K562 (cell line): ENCODE measurements at regions of chr2 and their contacts with region 1.

Region 1: GRCh38 chr2:24409700-24410556 is 49.6 kb upstream of the ITSN2 start:
- DNase-seq: peak; percentile 57 to 78 (median 63)
- ATAC-seq: peak; percentile 95
- H3K4me3 ChIP-seq: no peak overlapping the region
- H3K27ac ChIP-seq: no peak overlapping the region
- H3K4me1 ChIP-seq: peaks cover 0 to 3% of the 10 kb centered on the region in 2 experiments; a peak in 1 of 5 replicates
- H3K27me3 ChIP-seq: no peaks in the 10 kb centered on the region
- CTCF ChIP-seq: peak; percentile 79 to 91 (median 80)
- EP300 ChIP-seq: no peak
- POLR2A ChIP-seq: no peak
- RAD21 ChIP-seq: peak; percentile 93 to 95

Region 2: DNA sequence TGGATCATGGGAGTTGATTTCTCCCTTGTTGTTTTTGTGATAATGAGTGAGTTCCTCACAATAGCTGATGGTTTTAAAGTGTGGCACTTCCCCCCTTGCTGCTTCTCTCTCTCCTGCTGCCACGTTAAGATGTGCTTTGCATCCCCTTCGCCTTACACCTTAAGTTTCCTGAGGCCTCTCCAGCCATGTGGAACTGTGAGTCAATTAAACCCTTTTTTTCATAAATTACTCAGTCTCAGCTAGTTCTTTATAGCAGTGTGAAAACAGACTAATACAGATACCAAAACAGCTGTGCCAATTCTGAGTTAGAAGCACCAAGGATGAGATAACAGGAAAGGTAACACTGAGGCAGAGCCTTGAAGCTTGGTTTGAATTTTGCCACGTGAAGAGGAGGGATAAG is 94.3 kb before region 1 on chr2:
- CTCF ChIA-PET with region 1: no interaction called
- POLR2A ChIA-PET with region 1: no interaction called
- in situ Hi-C with region 1: no loop called
- intact Hi-C with region 1: no loop called
- DNase-seq: no peak
- ATAC-seq: no peak
- H3K4me3 ChIP-seq: no peak overlapping the region
- H3K27ac ChIP-seq: no peak overlapping the region
- H3K4me1 ChIP-seq: no peaks in the 10 kb centered on the region
- H3K27me3 ChIP-seq: no peaks in the 10 kb centered on the region
- CTCF ChIP-seq: no peak
- EP300 ChIP-seq: no peak
- POLR2A ChIP-seq: no peak
- RAD21 ChIP-seq: no peak

Region 3: GRCh38 chr2:24421668-24422067 is 11.7 kb after region 1 on chr2:
- CTCF ChIA-PET with region 1: no interaction called
- POLR2A ChIA-PET with region 1: no interaction called
- in situ Hi-C with region 1: no loop called
- intact Hi-C with region 1: no loop called
- DNase-seq: peak; percentile 14 to 81 (median 37)
- ATAC-seq: peak; percentile 95
- H3K4me3 ChIP-seq: no peak overlapping the region
- H3K27ac ChIP-seq: no peak overlapping the region; the same call in 2 of the 3 replicates
- H3K4me1 ChIP-seq: peaks cover 3 to 4% of the 10 kb centered on the region in 2 experiments; a peak in 3 of 5 replicates
- H3K27me3 ChIP-seq: no peaks in the 10 kb centered on the region
- CTCF ChIP-seq: peak; percentile 74 to 82 (median 74)
- EP300 ChIP-seq: no peak
- POLR2A ChIP-seq: no peak
- RAD21 ChIP-seq: peak; percentile 89 to 94

Region 4: GRCh38 chr2:24515831-24516230 is 105.9 kb after region 1 on chr2:
- CTCF ChIA-PET with region 1: no interaction called
- POLR2A ChIA-PET with region 1: no interaction called
- in situ Hi-C with region 1: no loop called
- intact Hi-C with region 1: no loop called
- DNase-seq: no peak
- ATAC-seq: peak; percentile 78
- H3K4me3 ChIP-seq: no peak overlapping the region
- H3K27ac ChIP-seq: peak overlapping the region; percentile 15; the same call in 1 of the 3 replicates
- H3K4me1 ChIP-seq: peaks cover 10 to 14% of the 10 kb centered on the region in 2 experiments; a peak in 3 of 5 replicates
- H3K27me3 ChIP-seq: no peaks in the 10 kb centered on the region
- CTCF ChIP-seq: no peak
- EP300 ChIP-seq: no peak
- POLR2A ChIP-seq: no peak
- RAD21 ChIP-seq: no peak

Region 5: DNA sequence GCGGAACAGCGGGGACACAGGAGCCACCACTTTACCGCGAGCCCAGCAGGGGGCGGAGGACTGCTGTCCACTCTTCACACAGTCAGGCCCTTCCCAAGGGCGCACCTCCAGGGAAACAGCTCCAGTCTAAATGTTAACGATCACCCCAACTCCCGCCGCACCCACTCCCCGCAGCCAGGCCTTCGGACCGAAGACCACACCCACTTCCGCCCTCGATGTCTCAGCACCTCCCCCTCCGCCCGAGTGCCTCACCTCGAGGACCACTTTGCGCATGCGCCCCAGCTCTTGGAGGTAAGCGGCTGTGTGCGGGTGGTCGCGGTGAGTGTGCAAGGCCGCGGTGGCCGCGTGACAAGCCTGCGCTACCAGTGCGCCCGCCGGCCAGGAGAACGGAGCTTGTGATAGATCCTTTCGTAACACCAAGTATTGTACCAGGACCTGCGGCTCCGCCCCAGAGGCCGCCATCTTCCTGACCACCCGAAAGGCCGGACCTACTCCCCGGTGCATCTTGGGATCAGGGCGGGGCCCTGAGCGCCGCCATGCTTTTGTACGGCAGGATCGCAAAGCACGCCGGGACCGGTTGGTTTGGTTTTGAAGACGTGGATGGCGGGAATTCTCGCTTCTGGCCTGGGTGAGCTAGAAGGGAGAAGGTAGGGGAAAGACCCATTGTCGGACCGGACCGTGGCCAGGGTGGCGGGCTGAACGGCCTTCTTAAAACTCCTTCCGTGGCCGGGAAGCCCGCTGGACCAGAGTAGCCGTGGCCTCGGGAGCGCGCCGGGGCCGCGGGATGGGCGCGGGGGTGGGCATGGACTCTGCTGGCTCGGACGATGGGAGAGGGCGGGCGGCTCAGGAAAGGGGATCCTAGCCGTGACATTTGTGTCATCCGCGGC is 383.2 kb after region 1 on chr2 and contains the starts of genes CENPO and PTRHD1:
- CTCF ChIA-PET with region 1: interaction called, 3 read pairs
- POLR2A ChIA-PET with region 1: no interaction called
- in situ Hi-C with region 1: loop called (anchors 25 kb)
- intact Hi-C with region 1: loop called (anchors 2 kb)
- DNase-seq: peak; percentile 95 to 98 (median 96)
- ATAC-seq: peak; percentile 89
- H3K4me3 ChIP-seq: peak within 1 kb of the TSS; percentile 87
- H3K27ac ChIP-seq: peak within 1 kb of the TSS; percentile 99
- H3K4me1 ChIP-seq: peaks cover 9 to 35% of the 10 kb centered on the region in 2 experiments; a peak in 4 of 5 replicates
- H3K27me3 ChIP-seq: no peaks in the 10 kb centered on the region
- CTCF ChIP-seq: peak; percentile 82 to 87 (median 85)
- EP300 ChIP-seq: peak; percentile 48
- POLR2A ChIP-seq: peak; percentile 93
- RAD21 ChIP-seq: peak; percentile 77
- polyA plus RNA-seq, gene CENPO: 30.6 to 38.9 TPM
- polyA plus RNA-seq, gene PTRHD1: 32.9 to 46.6 TPM

Region 6: DNA sequence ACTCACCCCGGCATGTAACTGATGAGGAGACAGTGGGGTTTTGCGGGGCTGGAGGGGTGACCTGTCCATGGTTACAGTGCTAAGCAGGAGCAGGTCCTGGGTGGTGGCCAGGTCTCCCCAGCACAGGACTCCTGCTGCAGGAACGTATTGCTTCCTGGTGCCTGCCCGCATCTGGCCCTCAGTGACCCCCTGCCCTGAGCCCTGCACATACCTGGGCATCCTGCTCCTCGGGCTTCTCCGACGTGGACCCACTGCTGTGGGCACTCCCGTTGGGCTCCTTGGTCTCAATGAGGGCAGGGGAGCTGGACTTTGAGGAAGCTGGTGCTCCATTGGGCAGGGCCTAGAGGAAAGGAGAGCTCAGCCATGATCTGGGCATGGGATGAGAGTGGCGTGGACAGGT is 426.8 kb after region 1 on chr2:
- CTCF ChIA-PET with region 1: no interaction called
- POLR2A ChIA-PET with region 1: no interaction called
- in situ Hi-C with region 1: loop called (anchors 5 kb)
- intact Hi-C with region 1: no loop called
- DNase-seq: no peak
- ATAC-seq: no peak
- H3K4me3 ChIP-seq: no peak overlapping the region
- H3K27ac ChIP-seq: no peak overlapping the region
- H3K4me1 ChIP-seq: peaks cover 0 to 3% of the 10 kb centered on the region in 2 experiments; a peak in 2 of 5 replicates
- H3K27me3 ChIP-seq: no peaks in the 10 kb centered on the region
- CTCF ChIP-seq: no peak
- EP300 ChIP-seq: no peak
- POLR2A ChIP-seq: no peak
- RAD21 ChIP-seq: no peak

Region 7: GRCh38 chr2:24971536-24972314 is 561.8 kb after region 1 on chr2 and contains the start of gene DNAJC27:
- CTCF ChIA-PET with region 1: no interaction called
- POLR2A ChIA-PET with region 1: no interaction called
- in situ Hi-C with region 1: no loop called
- intact Hi-C with region 1: loop called (anchors 10 kb)
- DNase-seq: peak; percentile 98 to 99 (median 98)
- ATAC-seq: peak; percentile 97
- H3K4me3 ChIP-seq: peak within 1 kb of the TSS; percentile 81
- H3K27ac ChIP-seq: peak within 1 kb of the TSS; percentile 94
- H3K4me1 ChIP-seq: peaks cover 6 to 25% of the 10 kb centered on the region in 2 experiments
- H3K27me3 ChIP-seq: no peaks in the 10 kb centered on the region
- CTCF ChIP-seq: peak in 1 of 3 experiments; percentile 22; a peak in 2 of 6 replicates
- EP300 ChIP-seq: peak; percentile 46
- POLR2A ChIP-seq: peak; percentile 96
- RAD21 ChIP-seq: no peak
- polyA plus RNA-seq, gene DNAJC27: 0.53 to 1.1 TPM

Region 8: DNA sequence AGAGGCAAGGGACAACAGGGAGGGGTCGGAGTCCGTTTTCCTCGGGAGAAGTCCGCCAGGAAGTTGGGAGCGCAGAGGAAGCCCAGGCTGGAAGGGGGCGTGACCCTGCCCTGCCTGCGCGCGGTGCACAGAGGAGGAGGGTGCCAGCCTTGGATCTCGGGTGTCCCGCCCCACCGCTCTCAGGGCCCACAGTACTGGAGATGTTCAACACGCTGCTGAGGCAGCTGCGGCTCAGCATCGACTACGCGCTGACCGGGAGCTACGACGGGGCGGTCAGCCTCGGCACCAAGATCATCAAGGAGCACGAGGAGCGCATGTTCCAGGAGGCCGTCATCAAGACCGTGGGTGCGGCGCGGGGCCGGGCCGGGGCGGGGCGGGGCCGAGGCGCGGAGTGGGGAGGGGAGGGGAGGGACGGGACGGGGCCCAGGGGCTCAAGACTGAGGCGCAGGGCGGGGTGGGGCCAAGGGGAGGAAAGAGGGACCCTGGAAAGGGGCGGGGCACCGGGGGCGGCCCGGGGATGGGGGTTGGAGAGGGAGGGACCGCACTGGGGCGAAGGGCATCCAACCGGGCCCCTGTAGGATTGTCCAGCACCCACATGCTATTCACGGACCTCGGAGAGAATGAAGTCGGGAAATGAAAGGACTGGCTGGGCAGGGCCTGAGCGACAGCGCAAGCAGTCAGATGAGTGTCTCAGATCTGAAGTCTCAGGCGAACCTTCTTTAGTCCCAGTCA is 721.8 kb after region 1 on chr2:
- CTCF ChIA-PET with region 1: interaction called, 7 read pairs
- POLR2A ChIA-PET with region 1: no interaction called
- in situ Hi-C with region 1: loop called (anchors 10 kb)
- intact Hi-C with region 1: loop called (anchors 2 kb)
- DNase-seq: peak in 2 of 4 experiments; percentile 52 to 57
- ATAC-seq: peak; percentile 9; the same call in 1 of the 3 replicates
- H3K4me3 ChIP-seq: no peak overlapping the region
- H3K27ac ChIP-seq: no peak overlapping the region
- H3K4me1 ChIP-seq: peaks cover 2 to 12% of the 10 kb centered on the region in 2 experiments; a peak in 4 of 5 replicates
- H3K27me3 ChIP-seq: peaks cover 48 to 78% of the 10 kb centered on the region in 2 experiments; a peak in 4 of 5 replicates
- CTCF ChIP-seq: no peak
- EP300 ChIP-seq: no peak
- POLR2A ChIP-seq: no peak
- RAD21 ChIP-seq: no peak

Region 9: DNA sequence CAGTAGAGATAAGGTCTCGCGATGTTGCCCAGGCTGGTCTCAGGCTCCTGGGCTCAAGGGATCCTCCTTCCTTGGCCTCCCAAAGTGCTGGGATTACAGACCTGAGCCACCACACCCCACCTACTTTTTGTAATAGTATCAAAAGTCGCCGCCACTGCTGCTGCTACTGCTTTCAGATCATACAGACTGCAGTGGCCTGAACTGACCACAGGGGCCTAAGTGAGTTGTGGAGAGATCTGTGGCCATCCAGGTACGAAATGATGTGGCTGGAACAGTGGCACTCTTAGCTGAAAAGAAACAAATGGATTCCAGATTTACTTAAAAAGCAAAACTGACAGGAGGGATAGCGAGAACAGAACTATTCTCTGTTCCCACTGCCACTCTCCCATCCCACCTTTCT is 791.3 kb after region 1 on chr2:
- CTCF ChIA-PET with region 1: interaction called, 7 read pairs
- POLR2A ChIA-PET with region 1: no interaction called
- in situ Hi-C with region 1: no loop called
- intact Hi-C with region 1: loop called (anchors 5 kb)
- DNase-seq: peak; percentile 43 to 53 (median 50)
- ATAC-seq: peak; percentile 93
- H3K4me3 ChIP-seq: no peak overlapping the region
- H3K27ac ChIP-seq: no peak overlapping the region
- H3K4me1 ChIP-seq: peaks cover 0 to 11% of the 10 kb centered on the region in 2 experiments; a peak in 2 of 5 replicates
- H3K27me3 ChIP-seq: 0 out of 5 replicates have a peak, but pooled peaks cover 0 to 2% of the 10 kb centered on the region in 2 experiments
- CTCF ChIP-seq: peak; percentile 42 to 54 (median 48); a peak in 3 of 6 replicates
- EP300 ChIP-seq: no peak
- POLR2A ChIP-seq: no peak
- RAD21 ChIP-seq: peak in 1 of 2 experiments; percentile 33; a peak in 2 of 4 replicates